Activated naive CD8-positive, alpha-beta T cell treated with anti-CD3 and anti-CD28 coated beads, Interleukin-2, amount 10 ng/mL, durations not matched to agents 7 days and 5 days (primary cell): ENCODE measurements at regions of chr1 and their contacts with region 1.

Region 1: GRCh38 chr1:234355782-234356510 is 17.3 kb upstream of the COA6 start:
- DNase-seq: no peak
- ATAC-seq: no peak
- H3K4me3 Mint-ChIP-seq: no peak overlapping the region
- H3K27ac Mint-ChIP-seq: no peak overlapping the region
- H3K4me1 Mint-ChIP-seq: peaks cover 6% of the 10 kb centered on the region
- H3K27me3 Mint-ChIP-seq: peaks cover 20% of the 10 kb centered on the region

Region 2: DNA sequence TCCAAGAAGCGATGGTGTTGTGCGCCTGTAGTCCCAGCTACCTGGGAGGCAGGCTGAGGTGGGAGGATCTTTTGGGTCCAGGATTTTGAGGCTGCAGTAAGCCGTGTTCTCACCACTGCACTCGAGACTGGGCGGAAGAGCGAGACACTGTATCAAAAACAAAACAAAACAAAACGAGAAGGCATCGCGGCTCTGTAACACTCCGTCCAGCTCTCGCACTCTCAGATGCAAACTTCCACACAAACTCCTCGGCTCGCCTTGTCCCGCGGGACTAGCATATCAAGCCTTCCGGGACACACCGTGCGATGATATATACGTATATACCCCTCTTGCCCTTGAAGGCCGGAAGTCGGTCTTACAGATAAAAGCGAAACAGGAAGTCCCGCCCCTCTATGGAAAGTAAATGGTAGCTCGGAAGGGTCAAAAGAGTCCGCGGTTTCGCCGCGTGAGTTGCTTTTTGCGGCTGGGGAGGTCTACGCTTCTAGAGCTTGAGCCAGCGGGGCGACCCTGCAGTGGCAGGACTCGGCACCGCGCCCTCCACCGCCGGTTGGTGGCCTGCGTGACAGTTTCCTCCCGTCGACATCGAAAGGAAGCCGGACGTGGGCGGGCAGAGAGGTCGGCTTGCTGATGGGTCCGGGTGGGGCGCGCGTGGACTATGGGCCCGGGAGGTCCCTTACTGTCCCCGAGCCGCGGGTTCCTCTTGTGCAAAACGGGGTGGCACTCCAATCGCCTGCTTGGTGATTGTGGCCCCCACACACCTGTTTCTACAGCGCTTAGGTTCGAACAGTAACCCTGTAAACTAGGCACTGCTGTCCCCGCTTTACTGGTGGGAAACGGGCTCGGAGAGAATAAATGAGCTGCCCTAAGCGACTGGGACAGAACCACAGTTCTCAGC is 17.4 kb after region 1 on chr1 and contains the start of gene COA6:
- POLR2A ChIA-PET with region 1: interaction called, 17 read pairs
- DNase-seq: peak; percentile 90
- ATAC-seq: peak; percentile 88
- H3K4me3 Mint-ChIP-seq: peak within 1 kb of the TSS; percentile 95
- H3K27ac Mint-ChIP-seq: peak within 1 kb of the TSS; percentile 99
- H3K4me1 Mint-ChIP-seq: peaks cover 36% of the 10 kb centered on the region
- H3K27me3 Mint-ChIP-seq: peaks cover 1% of the 10 kb centered on the region
- total RNA-seq, gene COA6: 27.6 to 32.0 TPM